Activated T-helper 1 cell treated with anti-CD3 and anti-CD28 coated beads, Interleukin-12 subunit alpha, Interleukin-12 subunit beta, Interleukin-2, Interleukin-4 antibody, amounts not matched to agents 30 ng/mL and 10 ng/mL and 1 ng/mL, durations not matched to agents 14 hours and 24 hours and 36 hours (primary cell): ENCODE measurements at regions of chr11 and their contacts with region 1.

Region 1: DNA sequence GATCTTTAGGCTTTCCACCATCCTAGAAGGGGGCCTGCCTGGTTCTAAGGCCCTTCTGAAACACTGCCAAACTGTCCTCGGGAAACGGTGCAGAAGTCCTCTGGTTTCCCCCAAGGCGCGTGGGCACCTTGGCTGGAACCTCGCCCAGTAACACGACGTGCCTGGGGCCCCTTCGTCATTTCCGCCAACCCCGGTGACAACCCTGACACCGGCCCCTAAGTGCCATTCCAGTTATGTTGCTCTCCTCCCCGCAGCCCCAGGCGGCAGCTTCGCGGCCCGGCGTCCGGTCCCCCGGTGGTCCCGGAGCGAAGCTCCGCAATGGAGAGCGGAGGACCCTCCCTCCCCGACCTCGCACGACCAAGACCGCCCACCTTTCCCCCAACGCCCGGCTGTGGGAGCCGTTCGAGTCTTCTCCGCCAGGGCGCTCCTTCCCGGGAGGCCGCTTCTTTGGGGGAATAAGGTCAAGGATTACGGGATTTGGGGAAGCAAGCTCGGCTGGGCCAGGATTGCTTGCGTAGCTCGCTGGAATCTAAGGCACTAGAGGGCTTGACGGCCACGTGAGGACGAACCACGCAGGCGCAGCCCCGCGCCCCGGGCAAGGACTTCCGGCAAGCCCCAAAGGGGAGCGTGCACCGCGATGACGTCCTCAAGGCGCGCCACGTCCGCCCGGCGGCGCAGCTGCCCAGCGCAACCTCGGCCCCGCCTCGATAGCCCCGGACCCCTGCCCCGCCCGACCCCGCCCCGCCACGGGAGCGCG is 626 bp downstream of the RNH1 start:
- DNase-seq: peak; percentile 97
- H3K4me3 Mint-ChIP-seq: peak overlapping the region; percentile 92
- H3K27ac Mint-ChIP-seq: peak overlapping the region; percentile 100
- H3K4me1 Mint-ChIP-seq: peaks cover 15% of the 10 kb centered on the region
- H3K27me3 Mint-ChIP-seq: no peaks in the 10 kb centered on the region

Region 2: GRCh38 chr11:236774-237767 is 269.3 kb before region 1 on chr11 and contains the start of gene PSMD13:
- intact Hi-C with region 1: loop called (anchors 1 kb)
- DNase-seq: peak; percentile 84
- H3K4me3 Mint-ChIP-seq: peak within 1 kb of the TSS; percentile 97
- H3K27ac Mint-ChIP-seq: peak within 1 kb of the TSS; percentile 98
- H3K4me1 Mint-ChIP-seq: peaks cover 46% of the 10 kb centered on the region
- H3K27me3 Mint-ChIP-seq: peaks cover 2% of the 10 kb centered on the region
- total RNA-seq, gene PSMD13: 261 and 266 TPM in 2 replicates

Region 3: GRCh38 chr11:406978-407739 is 99.3 kb before region 1 on chr11:
- intact Hi-C with region 1: loop called (anchors 1 kb)
- DNase-seq: peak; percentile 84
- H3K4me3 Mint-ChIP-seq: no peak overlapping the region
- H3K27ac Mint-ChIP-seq: peak overlapping the region; percentile 23
- H3K4me1 Mint-ChIP-seq: no peaks in the 10 kb centered on the region
- H3K27me3 Mint-ChIP-seq: peaks cover 2% of the 10 kb centered on the region

Region 4: GRCh38 chr11:518463-519250 is 12.2 kb after region 1 on chr11:
- intact Hi-C with region 1: loop called (anchors 1 kb)
- DNase-seq: peak; percentile 81
- H3K4me3 Mint-ChIP-seq: peak overlapping the region; percentile 75
- H3K27ac Mint-ChIP-seq: peak overlapping the region; percentile 47
- H3K4me1 Mint-ChIP-seq: peaks cover 5% of the 10 kb centered on the region
- H3K27me3 Mint-ChIP-seq: no peaks in the 10 kb centered on the region

Region 5: GRCh38 chr11:568306-569157 is 62.1 kb after region 1 on chr11:
- intact Hi-C with region 1: loop called (anchors 2 kb)
- DNase-seq: peak; percentile 97
- H3K4me3 Mint-ChIP-seq: peak overlapping the region; percentile 79
- H3K27ac Mint-ChIP-seq: no peak overlapping the region
- H3K4me1 Mint-ChIP-seq: peaks cover 15% of the 10 kb centered on the region
- H3K27me3 Mint-ChIP-seq: peaks cover 2% of the 10 kb centered on the region

Region 6: DNA sequence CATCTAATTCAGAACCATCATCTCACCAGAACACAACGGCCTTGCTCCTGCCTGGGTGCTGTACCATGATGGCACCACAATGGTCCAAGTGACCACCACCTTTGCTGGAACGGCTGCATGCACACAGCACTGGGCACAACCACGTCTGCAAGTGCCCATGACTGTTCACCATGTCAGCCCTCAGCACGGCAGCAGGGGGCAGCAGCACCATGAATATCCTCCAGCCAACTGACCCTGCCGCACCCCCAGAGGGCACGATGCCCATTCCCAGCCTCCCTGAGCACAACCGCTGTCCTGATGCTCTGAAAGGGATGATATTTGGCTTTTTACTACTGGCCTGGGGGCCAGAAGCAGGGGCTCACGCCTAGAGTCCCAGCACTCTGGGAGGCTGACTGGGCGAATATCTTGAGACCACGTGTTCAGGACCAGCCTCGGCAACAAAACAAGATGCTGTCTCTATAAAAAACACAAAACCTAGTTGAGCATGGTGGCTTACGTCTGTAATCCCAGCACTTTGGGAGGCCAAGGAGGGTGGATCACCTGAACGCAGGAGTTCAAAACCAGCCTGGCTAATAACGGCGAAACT is 156.4 kb after region 1 on chr11:
- intact Hi-C with region 1: no loop called
- DNase-seq: no peak
- H3K4me3 Mint-ChIP-seq: no peak overlapping the region
- H3K27ac Mint-ChIP-seq: no peak overlapping the region
- H3K4me1 Mint-ChIP-seq: no peaks in the 10 kb centered on the region
- H3K27me3 Mint-ChIP-seq: no peaks in the 10 kb centered on the region

Region 7: GRCh38 chr11:809287-810039 is 303.0 kb after region 1 on chr11 and contains the start of gene RPLP2:
- intact Hi-C with region 1: loop called (anchors 2 kb)
- DNase-seq: peak; percentile 97
- H3K4me3 Mint-ChIP-seq: peak within 1 kb of the TSS; percentile 92
- H3K27ac Mint-ChIP-seq: peak within 1 kb of the TSS; percentile 90
- H3K4me1 Mint-ChIP-seq: peaks cover 28% of the 10 kb centered on the region
- H3K27me3 Mint-ChIP-seq: no peaks in the 10 kb centered on the region
- total RNA-seq, gene RPLP2: 2,072 and 2,148 TPM in 2 replicates